ENCODE measurements at regions of chr1 and their contacts with region 1.

Region 1: DNA sequence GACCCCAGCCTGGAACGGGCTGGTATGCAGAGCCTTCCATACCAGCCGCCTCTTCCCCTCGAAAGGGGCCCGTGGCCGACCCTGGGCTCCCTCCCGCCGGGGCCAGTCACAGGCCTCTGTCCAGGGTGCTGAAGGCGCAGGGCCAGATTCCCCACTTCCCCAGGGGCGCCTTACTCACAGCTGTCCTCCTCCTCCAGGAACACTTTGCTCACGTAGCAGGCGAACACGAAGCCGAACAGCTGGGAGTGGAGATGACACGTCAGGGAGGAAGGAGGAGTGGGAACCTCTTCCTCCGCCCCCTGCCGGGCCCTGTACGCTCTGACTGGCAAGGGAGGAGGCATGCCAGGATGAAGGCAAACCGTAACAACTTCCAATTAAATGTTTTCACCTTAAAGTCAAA is 57.3 kb downstream of the NKAIN1 start:
- DNase-seq: peak in 9 of 10 donors; percentile 26 to 85 (median 58)
- H3K4me3 ChIP-seq: peak overlapping the region in 55 of 59 donors; percentile 8 to 64 (median 42)
- H3K27ac ChIP-seq: peak overlapping the region in 9 of 59 donors; percentile 11 to 68 (median 36)
- H3K27me3 ChIP-seq: no peaks in the 10 kb centered on the region
- CTCF ChIP-seq: peak in 32 of 56 donors; percentile 8 to 47 (median 30)

Region 2: DNA sequence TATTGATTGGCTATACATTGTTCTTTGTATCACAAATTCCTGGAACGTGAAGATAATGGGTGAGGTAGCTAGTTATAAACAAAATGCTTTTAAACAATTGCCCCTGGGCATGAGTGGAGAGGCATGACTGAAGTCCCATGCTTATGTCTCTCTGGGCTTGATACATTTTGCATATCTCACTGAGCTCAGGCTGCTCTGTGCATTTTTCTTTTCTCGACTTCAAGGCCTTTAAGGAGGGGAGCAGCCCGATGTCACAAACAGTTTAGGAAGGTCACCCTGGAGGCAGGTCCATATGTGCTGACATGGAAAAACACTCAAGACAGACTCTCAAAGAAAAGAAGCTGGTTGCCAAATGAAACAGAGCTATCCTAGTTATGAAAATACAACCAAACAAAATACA is 36.7 kb before region 1 on chr1:
- intact Hi-C with region 1: no loop called
- DNase-seq: no peak
- H3K4me3 ChIP-seq: no peak overlapping the region
- H3K27ac ChIP-seq: no peak overlapping the region
- H3K27me3 ChIP-seq: no peaks in the 10 kb centered on the region
- CTCF ChIP-seq: no peak

Region 3: GRCh38 chr1:31239653-31240241 is 57.4 kb after region 1 on chr1 and contains the start of gene NKAIN1:
- intact Hi-C with region 1: loop called (anchors 2 to 5 kb)
- DNase-seq: peak in 3 of 10 donors; percentile 24 to 72 (median 58)
- H3K4me3 ChIP-seq: peak within 1 kb of the TSS; percentile 28 to 76 (median 58)
- H3K27ac ChIP-seq: peak within 1 kb of the TSS in 30 of 59 donors; percentile 3 to 74 (median 48)
- H3K27me3 ChIP-seq: peaks cover 0 to 29% (median 0%) of the 10 kb centered on the region in 45 donors
- CTCF ChIP-seq: peak in 2 of 56 donors; percentile 11 to 26
- total RNA-seq, gene NKAIN1: 3.6 to 42.1 (median 11.7) TPM

Region 4: DNA sequence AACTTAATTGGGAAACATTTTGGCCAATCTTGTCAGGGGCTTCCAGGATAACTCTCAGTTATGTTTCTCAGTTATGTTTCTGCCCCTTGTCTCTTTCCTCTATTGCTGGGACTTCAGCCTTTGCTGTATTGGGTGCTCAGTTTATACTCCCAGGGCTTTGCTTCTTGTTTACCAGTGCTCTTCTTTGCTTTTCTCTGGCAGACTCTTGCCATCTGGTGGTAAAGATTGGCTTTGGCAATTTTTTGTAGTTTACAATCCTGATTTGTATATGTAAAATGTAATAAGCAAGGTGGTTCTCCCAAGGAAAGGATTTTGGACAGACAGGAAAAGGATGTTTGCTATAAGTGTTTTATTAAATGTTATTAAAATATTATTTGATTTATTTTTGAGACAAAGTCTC is 152.7 kb after region 1 on chr1:
- intact Hi-C with region 1: loop called (anchors 1 to 2 kb)
- DNase-seq: peak in 1 of 10 donors; percentile 30
- H3K4me3 ChIP-seq: no peak overlapping the region
- H3K27ac ChIP-seq: peak overlapping the region in 3 of 59 donors; percentile 23 to 63 (median 28)
- H3K27me3 ChIP-seq: no peaks in the 10 kb centered on the region
- CTCF ChIP-seq: peak; percentile 44 to 89 (median 72)